T-cell (primary cell): ENCODE measurements at regions of chr9 and their contacts with region 1.

Region 1: GRCh38 chr9:126261584-126262356 is 64.9 kb upstream of the MVB12B start:
- DNase-seq: no peak
- ATAC-seq: no peak
- H3K4me3 ChIP-seq: no peak overlapping the region
- H3K4me3 Mint-ChIP-seq: no peak overlapping the region
- H3K27ac ChIP-seq: no peak overlapping the region
- H3K27ac Mint-ChIP-seq: no peak overlapping the region
- H3K4me1 ChIP-seq: no peaks in the 10 kb centered on the region
- H3K4me1 Mint-ChIP-seq: peaks cover 5 to 8% (median 7%) of the 10 kb centered on the region in 3 donors
- H3K27me3 ChIP-seq: peaks cover 10 to 11% of the 10 kb centered on the region in 2 experiments
- H3K27me3 Mint-ChIP-seq: peaks cover 33 to 46% of the 10 kb centered on the region in 2 donors

Region 2: GRCh38 chr9:125505988-125506438 is 755.8 kb before region 1 on chr9:
- CTCF ChIA-PET with region 1: no interaction called
- POLR2A ChIA-PET with region 1: interaction called in 1 of 2 experiments, 16 read pairs
- DNase-seq: no peak
- ATAC-seq: no peak
- H3K4me3 ChIP-seq: no peak overlapping the region
- H3K4me3 Mint-ChIP-seq: no peak overlapping the region
- H3K27ac ChIP-seq: no peak overlapping the region
- H3K27ac Mint-ChIP-seq: no peak overlapping the region
- H3K4me1 ChIP-seq: no peaks in the 10 kb centered on the region
- H3K4me1 Mint-ChIP-seq: no peaks in the 10 kb centered on the region
- H3K27me3 ChIP-seq: no peaks in the 10 kb centered on the region
- H3K27me3 Mint-ChIP-seq: no peaks in the 10 kb centered on the region